HepG2 (cell line): ENCODE measurements at regions of chr6 and their contacts with region 1.

Region 1: DNA sequence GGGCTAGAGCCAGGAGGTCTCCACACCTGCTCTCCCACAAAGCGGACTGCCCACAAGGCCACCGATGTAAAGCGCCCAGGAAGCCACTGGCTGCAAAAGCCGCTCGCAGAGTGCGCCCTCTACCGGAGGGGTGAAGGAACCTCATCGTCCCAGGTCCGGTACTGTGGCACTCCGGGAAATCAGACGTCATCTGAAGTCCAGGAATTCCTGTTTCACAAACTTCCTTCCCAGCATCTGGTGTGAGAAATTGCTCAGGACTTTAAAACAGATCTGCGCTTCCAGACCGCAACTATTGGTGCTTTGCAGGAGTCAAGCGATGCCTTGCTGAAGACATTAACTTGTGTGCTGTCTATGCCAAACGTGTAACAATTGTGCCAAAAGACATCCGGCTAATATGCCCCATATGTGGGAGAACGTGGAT is 115.1 kb upstream of the ARID1B start:
- DNase-seq: peak; percentile 50
- ATAC-seq: peak; percentile 96
- H3K4me3 ChIP-seq: no peak overlapping the region
- H3K27ac ChIP-seq: no peak overlapping the region
- H3K4me1 ChIP-seq: no peaks in the 10 kb centered on the region
- H3K27me3 ChIP-seq: peaks cover 2 to 22% of the 10 kb centered on the region in 2 experiments; a peak in 3 of 5 replicates
- CTCF ChIP-seq: peak; percentile 82
- EP300 ChIP-seq: 0 out of 4 replicates have a peak, but pooled peaks of 1 of the 2 experiments have one; percentile 20
- POLR2A ChIP-seq: no peak
- RAD21 ChIP-seq: peak; percentile 80

Region 2: DNA sequence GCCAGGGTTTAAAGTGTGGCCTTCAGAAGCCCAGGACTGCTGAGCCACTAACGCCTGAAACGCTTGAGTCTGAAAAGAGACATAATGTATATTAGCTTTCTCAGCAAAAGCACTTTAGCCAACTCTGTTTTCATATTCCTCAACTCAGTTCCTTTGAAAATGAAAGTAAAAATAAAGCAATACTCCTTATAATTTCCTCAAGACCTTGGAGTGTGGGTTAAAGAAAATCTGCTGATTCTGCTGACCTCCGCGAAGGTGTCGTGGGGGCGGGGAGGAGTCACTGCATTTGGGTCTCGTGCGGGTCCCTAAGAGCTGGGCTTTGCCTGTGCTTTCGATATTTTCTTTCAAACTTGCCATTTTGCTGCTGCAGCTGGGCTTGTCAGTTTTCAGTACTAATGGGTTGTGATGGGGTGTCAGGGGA is 27.1 kb before region 1 on chr6:
- CTCF ChIA-PET with region 1: no interaction called
- POLR2A ChIA-PET with region 1: no interaction called
- in situ Hi-C with region 1: no loop called
- intact Hi-C with region 1: no loop called
- DNase-seq: no peak
- ATAC-seq: no peak
- H3K4me3 ChIP-seq: no peak overlapping the region
- H3K27ac ChIP-seq: no peak overlapping the region
- H3K4me1 ChIP-seq: peaks cover 11% of the 10 kb centered on the region
- H3K27me3 ChIP-seq: no peaks in the 10 kb centered on the region; a peak in 1 of 5 replicates
- CTCF ChIP-seq: no peak
- EP300 ChIP-seq: no peak
- POLR2A ChIP-seq: no peak
- RAD21 ChIP-seq: no peak

Region 3: GRCh38 chr6:156647991-156648390 is 14.0 kb before region 1 on chr6:
- CTCF ChIA-PET with region 1: no interaction called
- POLR2A ChIA-PET with region 1: no interaction called
- in situ Hi-C with region 1: no loop called
- intact Hi-C with region 1: loop called (anchors 1 kb)
- DNase-seq: no peak
- ATAC-seq: no peak
- H3K4me3 ChIP-seq: no peak overlapping the region
- H3K27ac ChIP-seq: no peak overlapping the region
- H3K4me1 ChIP-seq: no peaks in the 10 kb centered on the region
- H3K27me3 ChIP-seq: peaks cover 0 to 34% of the 10 kb centered on the region in 2 experiments; a peak in 4 of 5 replicates
- CTCF ChIP-seq: no peak
- EP300 ChIP-seq: no peak
- POLR2A ChIP-seq: no peak
- RAD21 ChIP-seq: no peak

Region 4: GRCh38 chr6:156683821-156684220 is 21.8 kb after region 1 on chr6:
- CTCF ChIA-PET with region 1: no interaction called
- POLR2A ChIA-PET with region 1: no interaction called
- in situ Hi-C with region 1: no loop called
- intact Hi-C with region 1: no loop called
- DNase-seq: no peak
- ATAC-seq: no peak
- H3K4me3 ChIP-seq: no peak overlapping the region
- H3K27ac ChIP-seq: no peak overlapping the region
- H3K4me1 ChIP-seq: peaks cover 18% of the 10 kb centered on the region
- H3K27me3 ChIP-seq: peaks cover under 1 to 22% of the 10 kb centered on the region in 2 experiments; a peak in 4 of 5 replicates
- CTCF ChIP-seq: no peak
- EP300 ChIP-seq: no peak
- POLR2A ChIP-seq: no peak
- RAD21 ChIP-seq: no peak